ENCODE measurements at regions of chr15 and their contacts with region 1.

Region 1: DNA sequence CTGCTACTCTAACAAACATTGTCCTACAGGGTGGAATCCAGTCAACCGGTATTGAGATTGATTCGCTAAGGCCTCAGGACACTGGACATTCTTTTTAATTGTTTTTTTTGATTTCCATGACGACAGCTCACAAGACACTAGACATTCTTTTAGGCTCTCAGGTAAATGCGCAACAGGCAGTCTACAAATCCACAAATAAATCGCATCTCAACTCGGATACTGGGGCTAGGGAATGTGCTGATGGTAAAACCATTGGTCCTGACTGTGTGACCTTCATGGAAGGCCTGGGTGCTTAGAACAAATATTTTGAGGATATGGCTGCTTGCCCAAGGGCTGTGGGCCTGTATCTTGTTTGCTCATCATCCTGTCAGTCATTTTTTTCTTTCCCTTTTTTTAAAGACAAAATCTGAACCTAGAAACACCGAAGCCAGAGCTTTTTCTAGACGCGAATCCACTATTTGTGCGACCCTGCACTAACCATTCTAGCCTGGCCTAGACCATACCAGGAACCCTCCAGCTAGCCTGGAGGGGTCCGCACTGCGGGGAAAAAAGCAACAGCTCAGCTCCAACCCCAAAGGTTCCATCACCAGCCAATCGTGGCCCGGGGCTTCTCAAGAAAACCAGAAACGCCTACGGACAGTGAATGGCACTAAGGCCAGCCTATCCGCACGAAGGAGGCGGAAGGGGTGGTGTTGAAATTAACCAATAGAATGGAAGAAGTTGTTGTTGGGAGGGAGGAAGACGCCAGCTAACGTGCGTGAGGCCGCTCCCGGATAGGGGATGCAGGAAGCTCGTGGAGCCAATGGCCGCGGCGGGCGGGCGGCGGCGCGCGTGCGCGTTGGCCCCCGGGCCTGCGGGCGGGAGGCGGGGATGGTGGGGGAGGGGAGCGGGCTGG is 18.1 kb upstream of the CHD2 start:
- H3K4me3 Mint-ChIP-seq: peak overlapping the region; percentile 80
- H3K27ac Mint-ChIP-seq: peak overlapping the region; percentile 98
- H3K4me1 Mint-ChIP-seq: peaks cover 46% of the 10 kb centered on the region
- H3K27me3 Mint-ChIP-seq: peaks cover 3% of the 10 kb centered on the region

Region 2: GRCh38 chr15:92636908-92637481 is 245.1 kb before region 1 on chr15:
- intact Hi-C with region 1: no loop called
- H3K4me3 Mint-ChIP-seq: no peak overlapping the region
- H3K27ac Mint-ChIP-seq: no peak overlapping the region
- H3K4me1 Mint-ChIP-seq: no peaks in the 10 kb centered on the region
- H3K27me3 Mint-ChIP-seq: peaks cover 2% of the 10 kb centered on the region

Region 3: DNA sequence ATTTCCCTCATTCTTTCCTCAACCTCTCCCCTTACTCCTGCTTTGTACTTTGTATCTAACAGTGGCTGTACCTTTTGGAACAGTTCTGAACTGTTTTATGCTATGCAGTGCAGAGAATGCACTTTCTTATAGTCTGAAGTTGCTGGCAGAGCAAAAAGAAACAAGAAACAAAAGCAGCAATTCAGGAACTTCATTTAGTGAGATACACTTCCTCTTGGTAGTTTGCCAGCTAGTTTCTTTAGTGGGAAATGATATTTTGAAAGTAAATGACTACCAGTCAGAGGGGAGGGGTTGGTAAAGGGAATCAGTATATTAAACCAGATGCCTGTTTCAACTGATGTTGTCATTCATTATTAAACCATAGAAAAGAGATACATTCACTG is 36.9 kb before region 1 on chr15:
- intact Hi-C with region 1: loop called (anchors 5 kb)
- H3K4me3 Mint-ChIP-seq: peak overlapping the region; percentile 60
- H3K27ac Mint-ChIP-seq: peak overlapping the region; percentile 96
- H3K4me1 Mint-ChIP-seq: peaks cover 48% of the 10 kb centered on the region
- H3K27me3 Mint-ChIP-seq: no peaks in the 10 kb centered on the region

Region 4: GRCh38 chr15:92903941-92904831 is 22.1 kb after region 1 on chr15:
- intact Hi-C with region 1: loop called (anchors 2 kb)
- H3K4me3 Mint-ChIP-seq: peak overlapping the region; percentile 83
- H3K27ac Mint-ChIP-seq: peak overlapping the region; percentile 96
- H3K4me1 Mint-ChIP-seq: peaks cover 48% of the 10 kb centered on the region
- H3K27me3 Mint-ChIP-seq: no peaks in the 10 kb centered on the region

Region 5: DNA sequence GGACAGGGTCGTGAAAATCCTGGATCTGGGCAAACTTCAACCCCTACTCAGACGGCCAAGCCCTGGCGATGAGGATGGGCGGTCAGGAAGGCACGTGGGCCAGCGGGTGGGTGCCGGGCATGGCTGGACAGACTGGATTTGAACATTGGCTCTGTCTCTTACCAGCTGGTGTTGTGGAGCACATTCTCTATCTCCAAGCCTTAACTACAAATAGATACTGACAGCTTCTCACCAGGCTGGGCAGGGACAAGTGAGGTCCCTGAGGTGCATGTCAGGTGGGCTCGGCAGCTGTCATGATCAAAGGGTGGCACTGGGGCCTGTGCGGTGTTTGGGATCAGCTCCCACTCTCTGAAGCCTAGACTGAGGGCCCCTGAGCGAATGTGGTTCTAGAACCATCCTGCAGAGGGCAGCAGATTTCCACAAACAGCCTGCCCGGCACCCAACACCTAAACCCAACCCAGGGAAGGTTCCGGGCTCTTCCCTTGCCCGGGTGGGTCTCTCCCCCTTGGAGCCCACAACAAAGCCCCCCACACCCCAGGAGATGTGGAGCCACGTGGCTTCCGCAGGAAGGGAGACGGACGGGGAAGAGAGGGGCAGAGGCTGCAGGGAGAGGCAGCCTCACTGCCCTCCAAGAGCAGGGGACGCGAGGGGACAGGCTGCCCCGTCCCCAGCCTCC is 148.5 kb after region 1 on chr15:
- intact Hi-C with region 1: no loop called
- H3K4me3 Mint-ChIP-seq: no peak overlapping the region
- H3K27ac Mint-ChIP-seq: peak overlapping the region; percentile 95
- H3K4me1 Mint-ChIP-seq: peaks cover 54% of the 10 kb centered on the region
- H3K27me3 Mint-ChIP-seq: peaks cover 7% of the 10 kb centered on the region

Measured in dendritic cell treated with granulocyte-macrophage colony-stimulating factor and Interleukin-4, amounts not matched to agents 40 ng/mL and 50 ng/mL, for 4 days (primary cell).